Mammary epithelial cell (primary cell): ENCODE measurements at regions of chr9 and their contacts with region 1.

Region 1: GRCh38 chr9:117374076-117374725 is 40.7 kb downstream of the ASTN2 start:
- DNase-seq: no peak
- H3K4me3 ChIP-seq: no peak overlapping the region
- H3K27ac ChIP-seq: no peak overlapping the region
- H3K4me1 ChIP-seq: no peaks in the 10 kb centered on the region
- H3K27me3 ChIP-seq: no peaks in the 10 kb centered on the region
- CTCF ChIP-seq: no peak

Region 2: GRCh38 chr9:117325831-117326230 is 48.4 kb before region 1 on chr9:
- CTCF ChIA-PET with region 1: no interaction called
- dilution Hi-C with region 1: loop called (anchors 5 kb)
- in situ Hi-C with region 1: no loop called
- intact Hi-C with region 1: no loop called
- DNase-seq: no peak
- H3K4me3 ChIP-seq: no peak overlapping the region
- H3K27ac ChIP-seq: no peak overlapping the region
- H3K4me1 ChIP-seq: no peaks in the 10 kb centered on the region
- H3K27me3 ChIP-seq: no peaks in the 10 kb centered on the region
- CTCF ChIP-seq: no peak